Activated CD4-positive, alpha-beta memory T cell treated with anti-CD3 and anti-CD28 coated beads for 36 hours (primary cell): ENCODE measurements at regions of chr1 and their contacts with region 1.

Region 1: DNA sequence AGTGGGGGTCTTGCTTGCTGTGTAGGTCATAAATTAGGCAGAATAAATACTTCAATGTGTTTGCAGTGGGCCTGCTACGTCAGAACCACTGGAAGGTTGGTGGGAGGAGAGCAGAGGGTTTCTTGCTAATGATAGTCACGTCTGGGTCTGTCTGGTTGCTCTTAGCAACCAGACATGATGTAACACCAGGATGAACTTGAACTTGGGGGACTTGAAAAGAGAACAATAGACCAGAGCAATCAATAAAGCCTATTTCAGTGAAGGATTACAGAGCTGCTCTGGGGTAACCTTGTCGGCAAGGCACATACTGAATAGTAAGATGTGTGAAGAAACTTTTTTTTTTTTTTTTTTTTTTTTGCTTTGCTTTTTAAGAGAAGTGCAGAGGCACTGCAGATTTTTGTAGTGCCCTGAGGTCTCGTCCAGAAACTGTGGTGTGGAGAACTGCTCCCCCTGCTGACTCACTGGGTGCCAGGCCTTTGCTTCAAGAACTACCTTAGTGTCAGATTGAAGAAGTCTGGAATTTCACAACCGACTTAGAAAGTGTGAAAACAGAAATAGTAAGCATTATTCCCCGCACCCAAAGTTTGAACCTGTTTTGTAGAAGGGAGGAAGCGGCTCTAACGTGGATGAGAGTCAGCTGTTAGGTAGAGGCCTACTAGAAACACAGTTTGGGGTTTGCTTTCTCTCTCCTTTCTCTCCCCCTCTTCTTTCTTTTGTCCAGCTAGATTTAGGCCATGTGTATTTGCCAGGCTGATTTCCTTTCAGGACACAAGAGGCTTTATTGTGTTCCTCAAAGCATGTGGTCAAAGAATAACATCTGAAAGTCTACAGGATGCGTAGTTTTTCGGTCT is 271.6 kb downstream of the TM2D1 start:
- DNase-seq: peak; percentile 84
- H3K4me3 Mint-ChIP-seq: peak overlapping the region; percentile 16
- H3K27ac Mint-ChIP-seq: peak overlapping the region; percentile 57
- H3K4me1 Mint-ChIP-seq: peaks cover 13% of the 10 kb centered on the region
- H3K27me3 Mint-ChIP-seq: no peaks in the 10 kb centered on the region

Region 2: GRCh38 chr1:60848583-60849188 is 604.6 kb before region 1 on chr1:
- CTCF ChIA-PET with region 1: interaction called, 3 read pairs
- POLR2A ChIA-PET with region 1: no interaction called
- intact Hi-C with region 1: loop called (anchors 2 kb)
- DNase-seq: no peak
- H3K4me3 Mint-ChIP-seq: no peak overlapping the region
- H3K27ac Mint-ChIP-seq: no peak overlapping the region
- H3K4me1 Mint-ChIP-seq: no peaks in the 10 kb centered on the region
- H3K27me3 Mint-ChIP-seq: peaks cover 12% of the 10 kb centered on the region

Region 3: GRCh38 chr1:61043010-61043820 is 410.1 kb before region 1 on chr1:
- CTCF ChIA-PET with region 1: interaction called, 9 read pairs
- POLR2A ChIA-PET with region 1: no interaction called
- intact Hi-C with region 1: loop called (anchors 2 kb)
- DNase-seq: peak; percentile 90
- H3K4me3 Mint-ChIP-seq: peak overlapping the region; percentile 68
- H3K27ac Mint-ChIP-seq: no peak overlapping the region
- H3K4me1 Mint-ChIP-seq: peaks cover 5% of the 10 kb centered on the region
- H3K27me3 Mint-ChIP-seq: peaks cover 27% of the 10 kb centered on the region

Region 4: GRCh38 chr1:61337981-61338848 is 115.1 kb before region 1 on chr1:
- CTCF ChIA-PET with region 1: interaction called, 3 read pairs
- POLR2A ChIA-PET with region 1: no interaction called
- intact Hi-C with region 1: loop called (anchors 10 kb)
- DNase-seq: no peak
- H3K4me3 Mint-ChIP-seq: no peak overlapping the region
- H3K27ac Mint-ChIP-seq: no peak overlapping the region
- H3K4me1 Mint-ChIP-seq: peaks cover 2% of the 10 kb centered on the region
- H3K27me3 Mint-ChIP-seq: peaks cover 2% of the 10 kb centered on the region

Region 5: DNA sequence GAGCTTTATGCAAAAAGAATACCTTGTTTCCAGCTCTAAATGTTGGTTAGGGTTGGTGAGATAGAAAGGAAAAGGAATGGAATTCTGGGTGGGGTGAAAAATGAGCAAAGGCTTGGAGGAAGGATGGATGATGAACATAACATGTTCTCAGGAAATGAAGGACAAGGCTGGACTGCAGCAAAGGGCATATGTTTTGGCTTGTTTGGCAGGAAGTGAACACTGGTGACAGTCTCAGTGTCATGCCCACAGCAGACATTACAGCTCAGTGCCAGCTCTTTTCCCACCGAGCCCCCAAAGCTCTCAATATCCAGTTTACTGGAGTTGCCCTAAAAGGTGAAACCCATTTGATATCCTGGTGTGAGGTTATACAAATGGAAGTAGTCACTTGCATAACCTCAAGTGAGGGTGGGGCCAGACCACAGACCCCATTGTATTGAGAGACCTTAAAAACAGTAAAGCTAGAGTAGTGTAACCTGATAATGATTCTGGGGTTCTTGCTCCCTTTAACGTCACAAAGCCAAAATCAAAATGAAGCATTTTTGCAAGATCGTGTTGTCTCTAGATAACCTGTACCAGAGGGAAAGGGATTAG is 100.4 kb before region 1 on chr1:
- CTCF ChIA-PET with region 1: no interaction called
- POLR2A ChIA-PET with region 1: no interaction called
- intact Hi-C with region 1: no loop called
- DNase-seq: no peak
- H3K4me3 Mint-ChIP-seq: no peak overlapping the region
- H3K27ac Mint-ChIP-seq: no peak overlapping the region
- H3K4me1 Mint-ChIP-seq: peaks cover 6% of the 10 kb centered on the region
- H3K27me3 Mint-ChIP-seq: no peaks in the 10 kb centered on the region